GM18951 (cell line): ENCODE measurements at regions of chr3 and their contacts with region 1.

Region 1: GRCh38 chr3:98593046-98593936 is at the start of gene CPOX:
- POLR2A ChIP-seq: peak; percentile 81

Region 2: DNA sequence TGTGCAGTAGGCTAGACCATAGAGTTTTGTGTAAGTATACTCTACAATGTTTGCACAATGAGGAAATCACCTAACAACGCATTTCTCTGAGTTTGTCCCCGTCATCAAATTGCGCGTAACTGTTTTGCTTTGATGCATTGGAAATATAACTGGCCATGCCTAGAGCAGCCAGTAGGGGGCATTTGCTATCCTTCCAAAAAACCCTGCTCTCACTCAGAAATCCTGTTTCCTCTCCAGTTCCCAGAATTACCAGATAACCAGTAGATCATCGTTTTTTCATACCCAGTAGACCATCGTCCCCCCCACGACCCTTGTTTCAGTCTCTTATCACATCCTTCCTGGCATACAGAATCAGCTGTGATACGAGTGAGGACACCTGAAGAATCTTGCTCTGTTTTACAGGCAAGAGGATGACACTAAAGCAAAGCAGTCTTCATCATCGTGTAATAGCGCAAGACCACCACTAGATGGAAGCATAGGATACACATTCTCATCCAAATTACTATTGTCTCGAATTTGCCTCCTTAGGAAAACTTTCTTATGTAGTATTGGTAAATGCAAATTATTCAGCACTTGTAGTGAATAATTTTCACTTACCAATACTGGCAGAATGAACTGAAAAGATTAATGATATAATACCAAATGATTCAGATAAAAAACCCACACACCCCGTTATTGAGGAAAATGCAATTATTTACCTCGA is 553.8 kb before region 1 on chr3:
- in situ Hi-C with region 1: loop called (anchors 25 kb)
- POLR2A ChIP-seq: no peak